GM10248 (cell line): ENCODE measurements at regions of chrX and their contacts with region 1.

Region 1: DNA sequence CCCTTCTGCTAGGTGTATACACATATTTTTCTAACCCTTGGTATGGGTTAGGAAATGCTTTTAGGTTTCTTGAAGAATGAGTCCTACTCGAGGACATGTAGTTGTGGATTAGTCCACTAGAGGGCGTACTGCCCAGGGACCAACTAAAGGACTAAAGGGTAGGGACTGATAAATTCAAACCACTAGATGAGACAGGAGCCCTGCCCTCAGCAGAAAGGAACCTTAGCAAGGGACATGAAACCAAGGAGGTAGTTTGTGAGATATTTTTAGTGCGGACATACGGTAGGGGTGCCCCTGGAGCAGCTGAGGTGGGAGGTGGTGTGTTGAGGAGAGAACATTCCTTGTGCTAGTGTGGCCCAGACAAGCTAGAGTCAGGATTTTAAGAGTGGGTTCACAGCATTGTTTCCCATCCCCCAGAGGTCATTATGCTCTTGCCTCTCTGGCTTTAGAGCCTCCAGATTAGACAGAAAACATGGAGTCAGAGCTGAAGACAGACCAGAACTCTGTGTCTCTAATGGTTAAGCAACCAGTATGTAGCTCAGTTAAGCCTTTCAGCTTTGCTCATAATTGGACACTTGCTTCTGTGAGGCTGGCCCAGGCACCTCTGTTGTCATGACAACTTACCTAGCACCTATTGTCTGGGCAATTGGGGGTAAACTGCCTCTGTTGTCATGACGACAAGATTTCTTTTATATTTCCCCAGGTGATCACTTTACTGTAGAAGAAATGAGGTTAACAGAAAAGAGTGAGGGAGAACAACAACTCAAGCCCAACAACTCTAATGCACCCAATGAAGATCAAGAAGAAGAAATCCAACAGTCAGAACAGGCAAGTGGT is 1.0 kb downstream of the TMEM31 start:
- DNase-seq: peak; percentile 63
- CTCF ChIP-seq: peak; percentile 51

Region 2: GRCh38 chrX:103722505-103722904 is 10.8 kb after region 1 on chrX:
- CTCF ChIA-PET with region 1: interaction called, 23 read pairs
- POLR2A ChIA-PET with region 1: no interaction called
- DNase-seq: no peak
- CTCF ChIP-seq: no peak

Region 3: DNA sequence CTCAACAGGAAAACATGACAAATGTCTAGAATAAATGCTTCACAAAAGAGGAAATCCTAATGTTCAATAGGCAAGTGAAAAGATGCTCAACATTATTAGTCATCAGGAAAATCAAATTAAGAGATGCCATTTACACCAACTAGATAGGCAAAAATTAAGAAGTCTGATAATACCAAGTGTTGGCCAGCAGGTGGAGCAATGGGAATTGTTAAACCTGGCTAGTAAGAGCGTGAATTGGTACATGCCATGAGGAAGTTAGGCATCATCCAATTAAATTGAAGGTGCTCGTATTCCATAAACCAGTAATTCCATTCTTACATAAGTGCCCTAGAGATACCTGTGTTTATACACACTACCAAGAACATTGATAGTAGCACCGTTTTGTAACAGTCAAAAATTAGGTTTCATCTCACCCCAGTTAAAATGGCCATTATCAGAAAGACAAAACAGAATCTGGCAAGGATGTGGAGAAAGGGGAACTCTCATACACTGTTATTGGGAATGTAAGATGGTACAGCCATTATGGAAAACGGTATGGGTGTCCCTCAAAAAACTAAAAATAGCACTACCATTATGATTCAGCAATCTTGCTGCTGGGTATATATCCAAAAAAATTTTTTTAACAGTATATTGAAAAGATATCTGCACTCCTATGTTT is 386.5 kb after region 1 on chrX:
- CTCF ChIA-PET with region 1: no interaction called
- POLR2A ChIA-PET with region 1: no interaction called
- DNase-seq: peak; percentile 20
- CTCF ChIP-seq: peak; percentile 52